ENCODE measurements at regions of chr5 and their contacts with region 1.

Region 1: DNA sequence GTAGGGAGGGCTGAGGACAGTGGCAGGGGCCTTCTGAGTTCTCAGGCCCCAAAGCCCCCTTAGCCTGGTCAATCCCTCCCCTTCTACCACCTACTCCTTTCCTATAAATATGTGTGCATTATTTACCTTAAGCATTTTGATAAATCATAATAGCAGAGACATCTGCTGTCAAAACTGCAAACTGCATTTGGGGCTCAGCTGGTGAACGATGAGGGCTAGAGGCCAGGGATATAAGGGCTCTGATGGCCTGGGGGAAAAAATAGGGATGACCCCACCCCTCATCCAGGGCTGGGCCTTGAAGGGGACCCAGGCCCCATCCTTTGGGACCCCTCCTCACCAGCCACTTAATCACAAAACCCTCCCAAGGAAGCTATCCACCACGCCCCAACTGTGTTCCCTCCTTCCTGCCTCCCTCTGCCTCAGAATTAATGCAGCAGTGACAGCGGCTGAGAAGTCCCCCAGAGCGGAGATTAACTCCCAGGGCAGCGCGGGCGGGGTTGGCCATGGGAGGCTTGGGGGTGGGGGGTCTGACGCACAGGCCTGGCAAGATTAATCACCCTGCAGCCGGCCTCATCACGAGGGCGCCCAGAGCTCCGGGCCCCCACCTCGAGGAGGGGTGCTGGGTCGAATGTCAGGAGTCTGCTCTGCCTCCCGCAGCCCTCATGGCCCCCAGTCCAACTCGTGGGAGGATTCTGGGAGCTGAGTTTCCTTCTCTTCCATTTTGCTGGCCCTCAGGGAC is 42.1 kb downstream of the CXXC5 start:
- DNase-seq: peak in 2 of 3 donors; percentile 51 to 73
- H3K4me3 ChIP-seq: no peak overlapping the region
- H3K4me3 Mint-ChIP-seq: peak overlapping the region in 1 of 2 donors; percentile 13
- H3K27ac ChIP-seq: no peak overlapping the region
- H3K27ac Mint-ChIP-seq: peak overlapping the region in 2 of 7 donors; percentile 40 to 72
- H3K4me1 ChIP-seq: peaks cover 6 to 25% of the 10 kb centered on the region in 2 donors
- H3K4me1 Mint-ChIP-seq: peaks cover 19% of the 10 kb centered on the region
- H3K27me3 ChIP-seq: peaks cover 0 to 26% of the 10 kb centered on the region in 2 donors
- H3K27me3 Mint-ChIP-seq: peaks cover 27 to 44% (median 40%) of the 10 kb centered on the region in 3 donors
- CTCF ChIP-seq: peak; percentile 62

Region 2: GRCh38 chr5:139560752-139561654 is 129.2 kb before region 1 on chr5 and contains the start of gene UBE2D2:
- intact Hi-C with region 1: no loop called
- DNase-seq: peak; percentile 95 to 98 (median 98)
- H3K4me3 ChIP-seq: peak within 1 kb of the TSS; percentile 73 to 80 (median 77)
- H3K4me3 Mint-ChIP-seq: peak within 1 kb of the TSS; percentile 93 to 99
- H3K27ac ChIP-seq: peak within 1 kb of the TSS; percentile 77 to 91
- H3K27ac Mint-ChIP-seq: peak within 1 kb of the TSS; percentile 90 to 98 (median 94)
- H3K4me1 ChIP-seq: peaks cover 37 to 49% of the 10 kb centered on the region in 2 donors
- H3K4me1 Mint-ChIP-seq: peaks cover 43% of the 10 kb centered on the region
- H3K27me3 ChIP-seq: no peaks in the 10 kb centered on the region
- H3K27me3 Mint-ChIP-seq: peaks cover 1 to 4% (median 2%) of the 10 kb centered on the region in 3 donors
- CTCF ChIP-seq: no peak
- polyA plus RNA-seq, gene UBE2D2: 41.2 to 167 (median 133) TPM

Region 3: DNA sequence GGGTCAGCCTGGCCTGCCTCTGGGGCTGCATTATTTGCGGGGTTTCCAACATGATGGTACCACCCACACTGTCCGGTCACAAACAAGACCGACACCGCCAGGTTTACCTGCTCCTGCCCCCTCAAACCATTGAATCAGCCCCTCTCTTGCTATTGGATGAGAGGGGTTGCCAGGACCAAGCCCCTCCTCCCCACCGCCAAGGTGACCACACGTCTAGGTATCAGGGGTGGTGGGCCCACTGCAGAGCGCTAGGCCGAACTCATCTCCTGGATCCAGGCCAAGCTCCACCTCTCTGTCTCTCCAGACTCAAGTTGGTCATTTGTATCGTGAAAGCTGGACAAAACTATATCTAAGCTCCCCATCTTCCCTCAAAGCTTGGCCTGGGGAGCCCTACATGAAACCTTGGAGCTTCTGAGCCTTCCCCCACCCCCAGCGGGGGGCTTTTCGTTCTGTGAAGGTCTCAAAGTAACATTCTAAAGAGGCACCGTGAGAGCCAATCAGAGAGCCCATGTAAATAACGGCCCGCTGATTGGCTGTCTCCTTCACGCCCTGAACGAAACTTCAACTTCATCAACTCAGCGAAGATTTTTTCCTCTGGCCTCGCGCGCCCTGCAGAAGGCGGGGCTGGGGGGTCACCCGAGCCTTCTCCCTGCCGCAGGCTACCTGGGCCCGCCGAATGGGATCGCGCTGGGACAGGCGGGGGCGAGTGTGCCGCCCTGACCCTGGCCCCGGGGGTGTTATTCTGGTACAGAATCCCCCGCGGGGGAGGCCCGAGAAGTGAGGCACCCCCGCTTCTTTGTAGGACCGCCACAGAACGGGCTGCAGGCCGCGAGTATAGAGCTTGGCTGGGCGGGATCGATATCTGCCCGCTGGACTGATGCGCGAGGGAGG is 55.8 kb after region 1 on chr5:
- intact Hi-C with region 1: loop called in 1 of 2 experiments (anchors 5 kb)
- DNase-seq: peak; percentile 13 to 50 (median 44)
- H3K4me3 ChIP-seq: peak overlapping the region in 1 of 3 experiments; percentile 35
- H3K4me3 Mint-ChIP-seq: peak overlapping the region in 1 of 2 donors; percentile 97
- H3K27ac ChIP-seq: no peak overlapping the region
- H3K27ac Mint-ChIP-seq: peak overlapping the region in 1 of 7 donors; percentile 51
- H3K4me1 ChIP-seq: peaks cover 23 to 27% of the 10 kb centered on the region in 2 donors
- H3K4me1 Mint-ChIP-seq: peaks cover 29% of the 10 kb centered on the region
- H3K27me3 ChIP-seq: peaks cover 46 to 66% of the 10 kb centered on the region in 2 donors
- H3K27me3 Mint-ChIP-seq: peaks cover 68 to 73% (median 71%) of the 10 kb centered on the region in 3 donors
- CTCF ChIP-seq: no peak